Cardiac septum (tissue), 1 donor: ENCODE measurements at regions of chr9 and their contacts with region 1.

Region 1: GRCh38 chr9:36166101-36166927 is 2.9 kb upstream of the CCIN start:
- DNase-seq: peak; percentile 94

Region 2: GRCh38 chr9:35954942-35955546 is 211.3 kb before region 1 on chr9:
- intact Hi-C with region 1: loop called (anchors 10 kb)
- DNase-seq: no peak

Region 3: DNA sequence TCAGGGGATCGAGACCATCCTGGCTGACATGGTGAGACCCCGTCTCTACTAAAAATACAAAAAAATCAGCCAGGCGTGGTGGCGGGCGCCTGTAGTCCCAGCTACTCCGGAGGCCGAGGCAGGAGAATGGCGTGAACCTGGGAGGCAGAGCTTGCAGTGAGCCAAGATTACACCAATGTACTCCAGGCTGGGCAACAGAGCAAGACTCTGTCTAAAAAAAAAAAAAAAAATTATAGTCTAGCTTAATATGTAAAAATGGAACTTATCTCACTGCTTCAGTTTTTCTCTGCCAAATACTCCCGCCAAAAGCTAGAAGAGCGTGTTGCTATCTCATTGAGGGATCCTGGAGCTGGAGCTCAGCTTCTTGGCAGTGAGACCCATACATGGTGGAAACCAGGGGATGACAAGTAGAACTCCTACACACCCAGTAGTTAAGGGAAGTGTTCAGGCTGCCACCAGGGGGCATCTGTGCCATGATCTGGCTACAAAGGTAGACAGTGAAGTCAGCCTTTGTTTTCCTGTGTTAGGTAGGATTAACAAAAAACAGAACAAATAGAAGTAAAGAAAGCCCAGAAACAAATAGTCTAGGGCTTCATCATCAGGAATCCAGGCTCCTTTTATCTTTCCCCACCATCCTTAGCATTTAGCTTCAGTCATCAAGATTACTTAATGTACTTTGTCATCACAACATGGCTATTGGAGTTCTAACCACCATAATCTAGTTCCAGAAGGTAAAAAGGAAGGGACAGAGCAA is 63.4 kb before region 1 on chr9:
- intact Hi-C with region 1: loop called (anchors 1 kb)
- DNase-seq: peak; percentile 91